Activated CD4-positive, alpha-beta T cell treated with anti-CD3 and anti-CD28 coated beads, Interleukin-2, amount 10 ng/mL, durations not matched to agents 24 days and 14 days (primary cell): ENCODE measurements at regions of chr19 and their contacts with region 1.

Region 1: DNA sequence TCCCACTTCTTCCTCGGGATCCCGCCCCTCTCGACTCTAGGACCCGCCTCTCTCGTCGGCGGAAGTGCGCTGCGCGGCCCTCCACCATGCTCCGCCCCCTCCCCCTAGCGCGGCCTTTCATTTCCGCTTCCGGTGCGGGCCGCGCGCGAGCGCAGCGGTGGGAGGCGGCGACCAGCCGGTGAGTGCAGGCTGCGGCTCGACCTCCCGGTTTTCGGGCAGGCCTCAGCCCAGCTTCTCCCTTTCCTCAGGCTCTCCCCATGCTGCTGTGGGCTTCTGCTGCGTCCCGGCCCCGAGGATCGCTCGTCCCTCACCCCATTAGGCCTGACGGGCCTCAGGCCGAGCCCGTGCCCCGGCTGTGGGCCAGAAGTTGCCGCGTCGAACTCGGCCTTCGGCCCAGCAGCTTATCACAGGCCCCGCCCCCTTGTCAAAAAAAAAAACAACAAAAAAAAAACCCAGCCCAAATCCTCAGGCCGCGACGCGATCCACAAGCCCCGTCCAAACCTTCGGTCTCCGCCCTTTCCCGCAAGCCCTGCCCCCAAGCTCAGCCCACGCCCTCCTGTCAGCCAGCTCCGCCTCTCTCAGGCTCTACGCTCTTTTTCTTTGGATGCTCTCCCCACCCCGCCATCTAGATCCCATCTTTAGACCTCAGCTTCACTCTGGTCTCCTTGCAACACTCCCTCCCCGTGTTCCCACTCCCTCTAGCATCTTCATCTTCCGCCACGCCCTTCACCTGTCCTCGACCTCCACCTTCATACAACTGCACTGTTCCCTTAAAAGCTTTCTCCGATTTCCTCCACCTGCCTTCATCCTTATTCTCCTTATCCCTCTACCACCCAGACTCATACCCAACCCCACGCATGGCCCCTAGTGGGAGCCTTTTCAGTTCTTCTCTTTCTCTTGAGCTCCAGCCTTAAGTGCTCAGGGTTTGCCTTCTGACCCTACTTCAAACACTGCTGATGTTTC is at the start of gene CLASRP:
- DNase-seq: peak; percentile 97
- H3K4me3 Mint-ChIP-seq: peak within 1 kb of the TSS; percentile 88
- H3K27ac Mint-ChIP-seq: peak within 1 kb of the TSS; percentile 95
- H3K4me1 Mint-ChIP-seq: peaks cover 26% of the 10 kb centered on the region
- H3K27me3 Mint-ChIP-seq: no peaks in the 10 kb centered on the region
- total RNA-seq, gene CLASRP: 107 and 111 TPM in 2 replicates

Region 2: DNA sequence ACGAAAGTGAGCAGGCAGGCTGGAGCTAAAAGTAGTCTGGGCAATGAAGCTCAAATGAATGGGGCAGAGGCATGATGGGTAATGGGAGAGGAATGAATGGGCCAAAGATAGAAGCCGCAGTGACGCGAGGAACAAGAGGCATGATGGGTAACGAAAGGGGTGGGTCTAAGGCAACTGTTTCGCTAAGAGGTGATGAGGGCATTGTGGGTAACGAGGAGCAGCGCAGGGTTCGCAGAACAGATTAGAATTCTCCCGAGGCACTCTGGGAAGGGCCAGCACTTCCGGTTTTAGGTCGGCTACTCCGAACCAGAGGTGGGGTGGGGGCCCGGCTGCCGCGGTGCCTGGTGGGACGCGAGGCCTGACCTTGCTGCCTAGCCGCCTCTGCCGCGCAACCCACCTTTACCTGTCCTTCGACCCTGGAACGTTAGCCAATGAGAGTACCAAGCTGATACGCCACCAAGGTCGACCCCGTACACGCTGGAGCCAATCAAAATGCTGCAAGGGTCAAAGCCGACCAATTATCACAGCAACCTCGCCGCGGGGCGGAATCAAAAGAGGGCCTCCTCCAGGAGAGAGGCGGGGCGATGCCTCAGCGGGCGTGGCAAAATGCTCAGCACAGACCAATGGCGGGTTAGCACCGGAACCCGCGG is 148.7 kb before region 1 on chr19:
- intact Hi-C with region 1: loop called (anchors 2 kb)
- DNase-seq: peak; percentile 100
- H3K4me3 Mint-ChIP-seq: peak overlapping the region; percentile 84
- H3K27ac Mint-ChIP-seq: peak overlapping the region; percentile 97
- H3K4me1 Mint-ChIP-seq: peaks cover 25% of the 10 kb centered on the region
- H3K27me3 Mint-ChIP-seq: no peaks in the 10 kb centered on the region

Region 3: GRCh38 chr19:45001087-45001739 is 38.0 kb before region 1 on chr19 and contains the start of gene RELB:
- intact Hi-C with region 1: loop called (anchors 1 kb)
- DNase-seq: peak; percentile 100
- H3K4me3 Mint-ChIP-seq: peak within 1 kb of the TSS; percentile 99
- H3K27ac Mint-ChIP-seq: peak within 1 kb of the TSS; percentile 100
- H3K4me1 Mint-ChIP-seq: peaks cover 13% of the 10 kb centered on the region
- H3K27me3 Mint-ChIP-seq: no peaks in the 10 kb centered on the region
- total RNA-seq, gene RELB: 67.6 and 72.7 TPM in 2 replicates

Region 4: DNA sequence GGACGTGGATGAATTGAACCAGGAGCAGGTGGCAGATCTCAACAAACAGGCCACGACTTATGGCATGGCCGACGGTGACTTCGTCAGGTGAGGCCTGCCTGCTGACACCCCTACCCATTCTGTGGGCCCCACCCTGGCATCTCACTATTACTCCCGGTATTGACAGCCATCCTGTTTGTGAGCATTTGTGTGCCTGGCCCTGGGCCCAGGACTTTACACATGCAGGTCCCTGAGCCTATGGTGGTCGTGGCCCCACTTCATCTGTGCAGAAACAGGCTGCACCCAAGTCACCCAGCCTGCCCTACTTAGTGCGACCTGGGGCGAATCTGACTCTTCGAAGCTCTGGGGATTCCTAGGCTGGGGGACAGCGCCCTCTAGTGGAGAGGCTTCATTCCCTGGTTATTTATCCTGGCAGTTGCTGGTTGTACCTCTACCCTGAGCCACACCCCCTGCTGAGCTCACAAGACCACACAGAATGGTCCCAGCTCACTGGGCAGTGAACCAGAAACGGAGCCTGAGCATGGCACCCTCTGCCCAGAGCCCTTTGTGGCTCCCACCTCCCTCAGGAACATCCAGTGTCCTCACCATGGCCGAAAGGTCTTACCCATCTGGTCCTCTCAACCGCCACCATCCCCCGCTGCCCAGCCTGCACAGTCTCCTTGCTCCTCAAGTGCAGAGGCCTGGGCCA is 20.2 kb after region 1 on chr19:
- intact Hi-C with region 1: loop called (anchors 2 kb)
- DNase-seq: peak; percentile 95
- H3K4me3 Mint-ChIP-seq: no peak overlapping the region
- H3K27ac Mint-ChIP-seq: no peak overlapping the region
- H3K4me1 Mint-ChIP-seq: peaks cover 4% of the 10 kb centered on the region
- H3K27me3 Mint-ChIP-seq: no peaks in the 10 kb centered on the region

Region 5: DNA sequence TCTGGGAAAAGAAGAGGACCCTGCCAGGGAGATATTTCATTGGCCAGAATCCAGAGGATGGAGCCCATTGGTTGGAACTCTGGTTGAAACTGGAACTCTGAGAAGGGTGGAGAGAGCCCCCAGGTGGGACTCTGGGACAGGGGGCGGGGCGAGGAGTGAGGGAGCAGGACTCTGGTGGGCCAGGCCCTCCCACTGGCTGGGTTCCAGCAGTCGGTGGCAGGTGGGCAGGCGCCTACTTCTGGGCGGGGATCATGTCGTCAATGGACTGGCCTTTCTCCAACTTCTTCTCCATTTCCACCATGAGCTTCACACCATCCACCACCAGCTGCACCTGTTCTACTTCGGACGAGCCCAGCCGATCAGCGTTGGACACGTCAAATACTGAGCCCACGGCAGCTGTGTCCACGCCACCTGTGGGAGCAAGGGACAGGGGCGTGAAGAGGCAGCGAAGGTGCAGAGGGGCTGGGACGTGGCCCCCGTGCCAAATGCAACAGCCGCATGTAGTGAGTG is 267.4 kb after region 1 on chr19:
- intact Hi-C with region 1: no loop called
- DNase-seq: no peak
- H3K4me3 Mint-ChIP-seq: no peak overlapping the region
- H3K27ac Mint-ChIP-seq: no peak overlapping the region
- H3K4me1 Mint-ChIP-seq: no peaks in the 10 kb centered on the region
- H3K27me3 Mint-ChIP-seq: no peaks in the 10 kb centered on the region